ENCODE measurements at regions of chr17 and their contacts with region 1.

Region 1: GRCh38 chr17:8118769-8119580 is 661 bp upstream of the ALOXE3 start:
- DNase-seq: no peak
- ATAC-seq: peak; percentile 68
- H3K4me3 ChIP-seq: peak overlapping the region; percentile 60 to 91
- H3K27ac ChIP-seq: peak overlapping the region; percentile 63; the same call in 1 of the 2 replicates
- H3K4me1 ChIP-seq: no peaks in the 10 kb centered on the region
- H3K27me3 ChIP-seq: no peaks in the 10 kb centered on the region
- CTCF ChIP-seq: peak; percentile 97

Region 2: GRCh38 chr17:7323731-7324437 is 795.1 kb before region 1 on chr17:
- CTCF ChIA-PET with region 1: no interaction called
- POLR2A ChIA-PET with region 1: no interaction called
- in situ Hi-C with region 1: no loop called
- intact Hi-C with region 1: no loop called
- DNase-seq: no peak
- ATAC-seq: 0 out of 2 replicates have a peak, but pooled peaks have one; percentile 51
- H3K4me3 ChIP-seq: no peak overlapping the region
- H3K27ac ChIP-seq: no peak overlapping the region
- H3K4me1 ChIP-seq: peaks cover 4% of the 10 kb centered on the region; the same call in 1 of the 2 replicates
- H3K27me3 ChIP-seq: no peaks in the 10 kb centered on the region
- CTCF ChIP-seq: peak; percentile 91; the same call in 1 of the 2 replicates

Region 3: DNA sequence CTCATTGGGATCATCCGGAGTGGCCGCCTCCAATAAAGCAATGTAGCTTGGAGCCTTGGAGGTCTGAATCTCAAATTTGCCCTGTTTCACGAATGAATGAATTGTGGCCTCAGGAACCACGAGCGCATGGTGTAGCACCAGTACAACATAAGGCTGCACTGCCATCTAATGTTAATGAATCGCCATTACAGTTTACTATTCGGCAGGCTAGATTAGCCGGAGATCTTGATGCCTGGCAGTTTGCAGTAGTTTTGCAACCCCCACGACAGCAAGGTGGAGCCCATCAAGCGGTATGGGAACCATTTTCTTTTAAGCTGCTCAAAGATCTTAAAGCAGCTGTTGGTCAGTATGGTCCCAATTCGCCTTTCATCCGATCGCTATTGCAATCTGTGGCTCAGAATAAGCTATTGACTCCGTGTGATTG is 61.3 kb before region 1 on chr17:
- CTCF ChIA-PET with region 1: interaction called, 3 read pairs
- POLR2A ChIA-PET with region 1: no interaction called
- in situ Hi-C with region 1: no loop called
- intact Hi-C with region 1: loop called (anchors 2 kb)
- DNase-seq: peak; percentile 75
- ATAC-seq: peak; percentile 89
- H3K4me3 ChIP-seq: peak overlapping the region; percentile 12; a peak in 3 of 4 replicates
- H3K27ac ChIP-seq: no peak overlapping the region
- H3K4me1 ChIP-seq: peaks cover 10% of the 10 kb centered on the region
- H3K27me3 ChIP-seq: peaks cover 4% of the 10 kb centered on the region
- CTCF ChIP-seq: peak; percentile 84

Region 4: GRCh38 chr17:8079291-8080207 is 39.4 kb before region 1 on chr17:
- CTCF ChIA-PET with region 1: interaction called, 3 read pairs
- POLR2A ChIA-PET with region 1: no interaction called
- in situ Hi-C with region 1: no loop called
- intact Hi-C with region 1: loop called (anchors 5 kb)
- DNase-seq: no peak
- ATAC-seq: peak; percentile 94
- H3K4me3 ChIP-seq: peak overlapping the region; percentile 39 to 60
- H3K27ac ChIP-seq: no peak overlapping the region
- H3K4me1 ChIP-seq: peaks cover 5% of the 10 kb centered on the region; the same call in 1 of the 2 replicates
- H3K27me3 ChIP-seq: no peaks in the 10 kb centered on the region
- CTCF ChIP-seq: peak; percentile 94

Region 5: GRCh38 chr17:8209909-8210760 is 91.2 kb after region 1 on chr17 and contains the start of gene AURKB:
- CTCF ChIA-PET with region 1: no interaction called
- POLR2A ChIA-PET with region 1: no interaction called
- in situ Hi-C with region 1: no loop called
- intact Hi-C with region 1: no loop called
- DNase-seq: peak; percentile 87
- ATAC-seq: peak; percentile 97
- H3K4me3 ChIP-seq: peak within 1 kb of the TSS; percentile 75 to 84
- H3K27ac ChIP-seq: peak within 1 kb of the TSS; percentile 93
- H3K4me1 ChIP-seq: peaks cover 18% of the 10 kb centered on the region
- H3K27me3 ChIP-seq: no peaks in the 10 kb centered on the region
- CTCF ChIP-seq: no peak
- total RNA-seq, gene AURKB: 85.8 TPM

Region 6: GRCh38 chr17:8222630-8223356 is 103.8 kb after region 1 on chr17:
- CTCF ChIA-PET with region 1: interaction called, 11 read pairs
- POLR2A ChIA-PET with region 1: no interaction called
- in situ Hi-C with region 1: no loop called
- intact Hi-C with region 1: loop called (anchors 10 kb)
- DNase-seq: peak; percentile 95
- ATAC-seq: peak; percentile 59
- H3K4me3 ChIP-seq: peak overlapping the region; percentile 81 to 90
- H3K27ac ChIP-seq: peak overlapping the region; percentile 94
- H3K4me1 ChIP-seq: peaks cover 23% of the 10 kb centered on the region
- H3K27me3 ChIP-seq: no peaks in the 10 kb centered on the region
- CTCF ChIP-seq: no peak

Region 7: DNA sequence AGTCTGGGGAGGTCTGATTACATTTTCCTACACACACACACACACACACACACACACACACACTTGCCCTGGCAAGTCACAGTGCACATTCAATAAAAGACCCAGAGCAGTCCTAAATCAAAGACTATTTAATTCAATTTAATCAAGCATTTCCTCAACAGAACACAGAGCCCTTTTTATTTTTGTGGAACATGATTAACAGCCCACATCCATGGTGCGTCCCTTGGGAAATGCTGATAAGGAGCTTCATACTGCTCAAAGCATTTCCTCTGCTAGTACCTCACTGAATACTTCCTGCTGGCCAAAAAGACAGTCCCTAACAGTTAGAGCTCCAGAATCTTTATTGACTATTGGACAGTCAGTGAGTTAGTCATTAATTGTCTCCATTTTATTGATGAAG is 554.6 kb after region 1 on chr17:
- CTCF ChIA-PET with region 1: no interaction called
- POLR2A ChIA-PET with region 1: no interaction called
- in situ Hi-C with region 1: no loop called
- intact Hi-C with region 1: no loop called
- DNase-seq: no peak
- ATAC-seq: no peak
- H3K4me3 ChIP-seq: no peak overlapping the region
- H3K27ac ChIP-seq: no peak overlapping the region
- H3K4me1 ChIP-seq: no peaks in the 10 kb centered on the region
- H3K27me3 ChIP-seq: no peaks in the 10 kb centered on the region
- CTCF ChIP-seq: no peak

Measured in Panc1 (cell line).